ENCODE measurements at regions of chr14 and their contacts with region 1.

Region 1: GRCh38 chr14:69460093-69460701 is 24.3 kb upstream of the PLEKHD1 start:
- DNase-seq: peak; percentile 40
- H3K4me3 Mint-ChIP-seq: no peak overlapping the region
- H3K27ac Mint-ChIP-seq: no peak overlapping the region
- H3K4me1 Mint-ChIP-seq: no peaks in the 10 kb centered on the region
- H3K27me3 Mint-ChIP-seq: no peaks in the 10 kb centered on the region

Region 2: DNA sequence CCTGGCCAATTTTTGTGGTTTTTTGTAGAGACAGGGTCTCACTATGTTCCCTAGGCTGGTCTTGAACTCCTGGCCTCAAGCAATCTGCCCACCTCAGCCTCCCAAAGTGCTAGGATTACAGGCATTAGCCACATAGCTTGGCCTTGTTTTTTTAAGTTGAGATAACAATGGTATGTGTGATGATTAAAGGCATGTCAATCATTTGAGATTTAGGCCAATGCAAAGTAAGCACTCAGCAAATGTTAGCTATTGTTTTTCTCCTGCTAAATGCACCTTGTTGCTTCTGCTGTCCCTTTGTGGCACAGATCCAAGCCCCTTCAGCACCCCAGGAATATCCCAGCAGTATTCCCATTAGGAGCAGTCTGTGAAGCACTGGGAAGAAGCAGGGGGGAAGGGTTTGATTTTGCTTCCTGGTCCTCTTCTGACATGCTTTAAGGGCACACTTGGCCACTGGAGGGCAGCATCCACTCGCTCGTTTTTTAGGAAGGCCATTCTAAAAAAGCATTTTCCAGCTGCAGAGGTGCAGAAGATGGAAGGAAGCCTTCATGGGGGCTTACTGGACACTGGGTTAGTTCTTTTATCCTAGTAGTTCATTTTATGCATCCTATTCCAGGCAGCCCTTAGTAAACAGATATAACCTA is 597.1 kb before region 1 on chr14:
- intact Hi-C with region 1: loop called (anchors 1 kb)
- DNase-seq: peak; percentile 44
- H3K4me3 Mint-ChIP-seq: no peak overlapping the region
- H3K27ac Mint-ChIP-seq: no peak overlapping the region
- H3K4me1 Mint-ChIP-seq: no peaks in the 10 kb centered on the region
- H3K27me3 Mint-ChIP-seq: peaks cover 3% of the 10 kb centered on the region

Region 3: DNA sequence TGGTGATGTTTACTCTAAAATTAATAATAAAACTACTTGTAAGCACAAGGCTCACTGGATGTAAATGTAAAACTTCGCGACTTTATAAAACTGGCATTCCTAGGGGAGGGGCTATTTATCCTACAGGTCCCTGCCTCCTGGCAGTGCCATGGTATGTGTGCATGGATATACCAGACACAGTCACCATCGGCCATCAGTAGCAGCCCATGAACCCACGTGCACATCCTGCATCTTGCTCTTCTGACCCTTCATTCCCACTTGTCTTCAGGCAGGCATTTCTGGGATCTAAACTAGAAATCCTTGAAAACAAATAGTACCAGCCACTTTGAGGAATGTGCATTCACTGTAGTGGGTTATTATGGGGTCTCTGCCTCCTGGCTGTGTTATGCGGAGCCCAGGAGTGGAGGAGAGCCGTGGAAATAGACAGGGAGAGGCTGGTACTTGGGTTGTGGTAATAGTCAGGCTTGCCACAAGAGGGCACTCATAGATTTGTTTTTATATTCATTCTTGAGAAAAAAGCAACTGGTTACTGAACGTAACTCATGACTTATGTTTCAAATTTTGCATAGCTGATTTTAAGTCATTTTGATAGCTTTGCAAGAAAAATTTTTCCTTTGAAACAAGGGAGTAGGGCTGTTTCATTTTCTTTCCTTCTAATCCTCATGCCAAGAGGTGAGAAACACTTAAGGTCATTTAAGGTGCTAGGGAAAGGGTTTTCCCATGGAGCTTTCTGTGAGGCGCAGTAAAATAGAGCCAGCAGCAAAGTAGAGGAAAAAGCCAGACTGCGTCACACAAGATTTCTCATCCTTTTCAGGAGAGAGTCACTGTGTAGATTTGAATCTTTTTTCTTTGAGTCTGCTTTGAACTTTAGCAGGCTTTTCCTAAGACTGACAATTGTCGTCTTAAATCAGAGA is 217.6 kb before region 1 on chr14:
- intact Hi-C with region 1: loop called (anchors 1 kb)
- DNase-seq: peak; percentile 27
- H3K4me3 Mint-ChIP-seq: no peak overlapping the region
- H3K27ac Mint-ChIP-seq: no peak overlapping the region
- H3K4me1 Mint-ChIP-seq: no peaks in the 10 kb centered on the region
- H3K27me3 Mint-ChIP-seq: peaks cover 2% of the 10 kb centered on the region

Region 4: DNA sequence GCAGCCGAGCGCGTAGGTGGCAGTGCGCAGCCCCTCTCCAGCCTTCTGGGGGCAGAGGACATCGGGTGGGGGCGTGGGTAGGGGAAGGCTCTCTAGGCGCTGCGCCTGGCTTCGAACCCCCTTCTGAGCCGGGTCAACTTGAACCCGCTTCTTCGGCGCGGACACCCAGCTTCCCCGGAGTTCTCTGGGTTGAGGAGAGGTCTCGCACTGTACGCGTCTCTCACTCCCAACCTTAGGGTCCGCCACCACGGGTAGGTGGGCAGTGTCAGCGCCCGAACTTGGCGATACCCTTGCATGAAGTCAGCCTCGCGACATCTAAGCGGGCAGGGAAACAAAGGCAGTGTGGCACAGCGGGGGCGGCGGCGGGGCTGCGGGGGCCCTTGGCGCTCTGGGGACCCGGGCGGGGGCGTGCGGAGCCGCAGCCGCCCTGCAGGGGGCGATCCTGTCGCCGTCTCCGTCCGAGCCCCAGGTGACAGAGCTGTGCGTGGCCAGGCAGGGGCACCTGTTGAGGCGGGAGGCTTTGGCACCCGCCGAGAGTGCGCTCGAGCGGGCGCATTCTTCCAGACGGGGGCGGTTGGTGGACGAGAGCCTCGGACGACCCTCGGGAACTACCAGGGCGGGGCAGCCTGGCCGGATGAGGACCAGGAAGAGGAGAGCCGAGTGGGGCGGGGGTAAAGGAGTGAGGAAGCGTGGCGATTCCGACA is 199.2 kb before region 1 on chr14:
- intact Hi-C with region 1: loop called (anchors 1 kb)
- DNase-seq: peak; percentile 16
- H3K4me3 Mint-ChIP-seq: peak overlapping the region; percentile 65
- H3K27ac Mint-ChIP-seq: no peak overlapping the region
- H3K4me1 Mint-ChIP-seq: peaks cover 6% of the 10 kb centered on the region
- H3K27me3 Mint-ChIP-seq: peaks cover 52% of the 10 kb centered on the region

Region 5: GRCh38 chr14:69441948-69442347 is 18.2 kb before region 1 on chr14:
- intact Hi-C with region 1: no loop called
- DNase-seq: no peak
- H3K4me3 Mint-ChIP-seq: peak overlapping the region; percentile 4
- H3K27ac Mint-ChIP-seq: peak overlapping the region; percentile 18
- H3K4me1 Mint-ChIP-seq: peaks cover 18% of the 10 kb centered on the region
- H3K27me3 Mint-ChIP-seq: no peaks in the 10 kb centered on the region

Region 6: GRCh38 chr14:69483765-69484443 is 23.7 kb after region 1 on chr14:
- intact Hi-C with region 1: no loop called
- DNase-seq: no peak
- H3K4me3 Mint-ChIP-seq: no peak overlapping the region
- H3K27ac Mint-ChIP-seq: no peak overlapping the region
- H3K4me1 Mint-ChIP-seq: no peaks in the 10 kb centered on the region
- H3K27me3 Mint-ChIP-seq: peaks cover 38% of the 10 kb centered on the region

Measured in activated T-helper 1 cell treated with anti-CD3 and anti-CD28 coated beads, Interleukin-12 subunit alpha, Interleukin-12 subunit beta, Interleukin-2, Interleukin-4 antibody, amounts not matched to agents 30 ng/mL and 10 ng/mL and 1 ng/mL, durations not matched to agents 14 hours and 24 hours and 36 hours (primary cell).